ENCODE measurements at regions of chr3 and their contacts with region 1.

Region 1: GRCh38 chr3:4720279-4721075 is 227.3 kb downstream of the ITPR1 start:
- DNase-seq: peak; percentile 35
- CTCF ChIP-seq: peak; percentile 44

Region 2: GRCh38 chr3:4738737-4739274 is 18.3 kb after region 1 on chr3:
- CTCF ChIA-PET with region 1: interaction called, 13 read pairs
- POLR2A ChIA-PET with region 1: no interaction called
- DNase-seq: no peak
- CTCF ChIP-seq: no peak

Region 3: GRCh38 chr3:4786431-4786830 is 66.0 kb after region 1 on chr3:
- CTCF ChIA-PET with region 1: no interaction called
- POLR2A ChIA-PET with region 1: no interaction called
- DNase-seq: no peak
- CTCF ChIP-seq: no peak

Region 4: DNA sequence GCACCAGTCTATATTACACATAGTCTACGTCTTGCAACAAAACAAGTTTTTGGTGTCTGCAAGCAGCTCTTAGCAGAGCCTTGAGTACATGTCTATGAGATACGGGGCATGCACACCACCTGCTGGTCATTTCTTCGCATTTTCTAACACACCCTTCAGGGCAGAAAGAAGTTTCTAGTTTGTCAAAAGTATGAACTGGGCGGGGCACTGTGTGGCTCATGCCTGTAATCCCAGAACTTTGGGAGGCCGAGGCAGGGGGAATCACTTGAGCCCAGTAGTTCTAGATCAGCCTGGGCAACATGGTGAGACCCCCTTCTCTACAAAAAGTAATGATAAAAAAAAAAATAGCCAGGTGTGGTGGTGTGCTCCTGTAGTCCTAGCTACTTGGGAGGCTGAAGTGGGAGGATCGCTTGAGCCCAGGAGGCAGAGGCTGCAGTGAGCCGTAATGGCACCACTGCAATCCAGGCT is 337.4 kb after region 1 on chr3:
- CTCF ChIA-PET with region 1: interaction called, 20 read pairs
- POLR2A ChIA-PET with region 1: no interaction called
- DNase-seq: peak; percentile 67
- CTCF ChIP-seq: peak; percentile 78

Measured in GM10248 (cell line).